Ascending aorta (tissue), 2 donors: ENCODE measurements at regions of chr2 and their contacts with region 1.

Region 1: DNA sequence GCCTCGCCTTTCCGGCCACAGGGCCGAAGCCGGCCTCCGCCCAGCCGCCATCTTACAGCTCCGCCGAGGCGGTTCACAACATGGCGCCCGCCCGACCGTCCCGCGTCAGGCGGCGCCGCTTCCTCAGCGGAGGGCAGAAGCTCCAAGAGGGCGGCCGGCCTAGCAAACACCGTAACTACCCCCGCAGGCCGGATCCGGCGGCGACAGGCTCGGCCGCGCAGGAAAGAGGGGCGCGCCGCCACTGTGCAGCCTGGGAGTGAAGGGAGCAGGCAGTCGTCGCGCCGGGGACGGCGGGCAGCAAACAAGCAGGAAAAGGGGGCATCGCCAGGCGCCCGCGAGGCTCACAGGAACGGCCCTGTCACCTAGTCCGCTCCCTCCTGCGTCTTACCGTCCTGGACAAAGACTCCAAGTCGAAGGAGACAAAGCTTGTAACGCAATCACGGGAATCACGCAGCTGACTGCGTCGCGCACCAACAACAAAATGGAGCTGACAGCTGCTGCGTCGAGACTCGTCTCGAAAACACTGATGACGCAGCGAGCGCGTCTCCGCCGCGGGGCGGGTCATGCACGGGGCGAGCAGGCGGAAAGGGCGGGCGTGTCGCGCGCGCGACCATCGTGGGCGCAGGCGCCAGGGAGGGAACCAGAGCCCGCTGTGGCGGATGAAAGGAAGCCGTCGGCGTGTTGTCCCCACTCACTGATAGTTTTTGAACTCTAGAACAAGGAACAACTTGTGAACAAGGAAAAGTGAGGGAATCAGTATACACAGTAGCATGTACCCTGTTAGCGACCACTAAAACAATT is at the start of gene CLK1:
- DNase-seq: peak; percentile 89 to 99
- H3K4me3 ChIP-seq: peak within 1 kb of the TSS; percentile 74 to 80
- H3K27ac ChIP-seq: peak within 1 kb of the TSS; percentile 96 to 100
- H3K4me1 ChIP-seq: peaks cover 0 to 23% of the 10 kb centered on the region in 2 donors
- H3K27me3 ChIP-seq: no peaks in the 10 kb centered on the region
- CTCF ChIP-seq: no peak
- total RNA-seq, gene CLK1: 43.5 TPM

Region 2: DNA sequence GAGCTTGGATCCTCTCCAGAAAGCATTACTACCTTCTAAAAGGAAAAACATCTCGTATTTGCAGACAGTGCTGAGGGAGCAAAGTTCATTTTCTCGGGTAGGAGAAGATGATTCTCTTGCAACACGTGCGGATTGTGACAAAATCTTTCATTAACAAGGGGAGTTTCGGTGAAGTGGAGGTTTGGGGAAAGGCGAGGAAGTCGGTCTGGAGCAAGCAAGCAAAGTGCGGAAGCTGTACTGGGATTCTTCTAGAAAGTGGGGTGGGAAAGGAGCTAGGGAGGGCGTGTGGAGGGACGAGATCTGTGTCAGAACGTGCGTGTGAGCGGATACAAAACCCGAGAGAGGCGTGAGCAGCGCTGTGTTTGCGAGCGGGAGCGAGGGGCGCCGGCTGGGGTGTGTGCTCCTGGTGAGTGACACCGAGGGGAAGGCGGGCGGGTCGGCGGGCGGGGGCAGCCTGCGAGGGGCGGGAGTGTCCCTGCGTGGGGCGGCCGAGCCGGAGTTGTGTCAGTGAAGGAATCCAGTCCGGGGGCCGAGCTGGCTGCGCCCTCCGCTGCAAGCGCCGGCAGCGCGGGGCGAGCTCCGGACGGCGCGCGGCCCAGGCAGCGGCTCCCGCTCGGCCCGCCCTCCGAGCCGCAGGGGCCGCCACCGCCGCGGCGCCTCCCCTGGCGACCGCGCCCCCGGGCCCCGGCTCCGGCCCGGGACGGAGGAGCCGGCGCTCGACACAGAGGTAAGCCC is 558.0 kb before region 1 on chr2 and contains the start of gene SPATS2L:
- intact Hi-C with region 1: loop called (anchors 5 kb)
- DNase-seq: peak; percentile 26 to 86
- H3K4me3 ChIP-seq: peak within 1 kb of the TSS; percentile 77 to 87
- H3K27ac ChIP-seq: peak within 1 kb of the TSS; percentile 86 to 91
- H3K4me1 ChIP-seq: peaks cover 0 to 7% of the 10 kb centered on the region in 2 donors
- H3K27me3 ChIP-seq: no peaks in the 10 kb centered on the region
- CTCF ChIP-seq: no peak
- total RNA-seq, gene SPATS2L: 36.6 TPM

Region 3: DNA sequence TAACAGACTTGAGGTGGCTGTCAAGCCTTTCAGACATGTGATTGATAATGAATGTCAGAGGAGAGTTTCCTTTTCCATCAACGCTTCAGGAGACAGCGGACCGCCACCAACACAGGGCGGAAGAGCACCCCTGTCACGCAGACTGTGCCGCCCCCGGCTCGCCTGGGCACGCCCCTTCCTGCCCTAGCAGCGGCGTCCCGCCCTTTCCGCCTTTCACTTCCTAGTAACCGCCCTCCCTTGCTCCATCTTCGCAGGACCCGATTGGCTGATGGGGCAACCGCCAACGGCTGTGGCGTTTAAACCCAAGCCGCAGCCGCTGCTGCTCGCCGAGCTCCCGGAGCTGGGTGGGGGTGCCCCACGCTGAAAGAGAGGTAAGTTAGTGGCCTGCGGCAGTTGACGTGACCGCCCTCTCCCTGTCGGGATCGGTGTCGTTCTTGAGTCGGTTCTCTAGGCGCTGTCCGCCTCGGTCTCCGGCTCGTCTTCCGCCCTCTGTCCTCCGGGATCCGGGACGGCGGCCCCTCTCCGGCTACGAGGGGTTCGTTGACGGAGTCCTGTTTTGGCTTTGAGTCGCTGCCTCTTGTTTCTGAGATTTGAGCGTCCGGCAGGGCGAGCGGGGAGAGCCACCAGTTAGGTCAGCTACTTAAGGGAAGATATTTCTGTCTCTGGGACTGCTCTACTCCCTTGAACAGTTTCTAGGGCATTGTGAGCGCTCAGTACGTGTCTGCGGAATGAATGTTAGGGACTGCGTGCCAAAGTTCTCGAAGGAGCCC is 338.3 kb before region 1 on chr2 and contains the start of gene SGO2:
- intact Hi-C with region 1: loop called (anchors 10 kb)
- DNase-seq: peak; percentile 70 to 97
- H3K4me3 ChIP-seq: peak within 1 kb of the TSS; percentile 63 to 69
- H3K27ac ChIP-seq: no peak within 1 kb of the TSS
- H3K4me1 ChIP-seq: peaks cover 0 to 6% of the 10 kb centered on the region in 2 donors
- H3K27me3 ChIP-seq: no peaks in the 10 kb centered on the region
- CTCF ChIP-seq: no peak
- total RNA-seq, gene SGO2: 0.96 TPM

Region 4: GRCh38 chr2:200713003-200713703 is 151.2 kb before region 1 on chr2:
- intact Hi-C with region 1: loop called (anchors 1 kb)
- DNase-seq: peak; percentile 81 to 95
- H3K4me3 ChIP-seq: peak overlapping the region; percentile 37 to 48
- H3K27ac ChIP-seq: peak overlapping the region; percentile 70 to 85
- H3K4me1 ChIP-seq: peaks cover 3% of the 10 kb centered on the region in 2 donors
- H3K27me3 ChIP-seq: no peaks in the 10 kb centered on the region
- CTCF ChIP-seq: peak; percentile 74 to 90 (median 82)

Region 5: DNA sequence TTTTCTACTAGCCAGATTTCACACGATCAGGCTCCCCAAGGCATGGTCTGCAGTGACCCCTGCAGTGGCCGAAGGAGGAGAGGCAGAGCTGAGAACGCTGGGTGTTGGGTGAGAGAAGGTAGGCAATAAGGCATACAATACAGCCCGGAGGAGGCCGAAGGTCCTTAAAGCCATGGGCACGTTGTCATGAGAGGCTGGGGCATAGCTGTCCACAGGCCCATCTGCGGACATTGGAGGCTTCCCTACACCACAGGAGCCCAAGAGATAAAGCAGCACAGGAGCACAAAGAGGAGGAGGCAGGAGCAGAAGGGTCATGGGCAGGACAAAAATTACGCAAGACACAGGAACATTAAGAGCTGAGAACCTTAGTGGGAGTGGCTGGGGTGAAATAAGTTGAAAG is 69.3 kb before region 1 on chr2:
- intact Hi-C with region 1: no loop called
- DNase-seq: no peak
- H3K4me3 ChIP-seq: no peak overlapping the region
- H3K27ac ChIP-seq: no peak overlapping the region
- H3K4me1 ChIP-seq: peaks cover 0 to 6% of the 10 kb centered on the region in 2 donors
- H3K27me3 ChIP-seq: no peaks in the 10 kb centered on the region
- CTCF ChIP-seq: no peak

Region 6: DNA sequence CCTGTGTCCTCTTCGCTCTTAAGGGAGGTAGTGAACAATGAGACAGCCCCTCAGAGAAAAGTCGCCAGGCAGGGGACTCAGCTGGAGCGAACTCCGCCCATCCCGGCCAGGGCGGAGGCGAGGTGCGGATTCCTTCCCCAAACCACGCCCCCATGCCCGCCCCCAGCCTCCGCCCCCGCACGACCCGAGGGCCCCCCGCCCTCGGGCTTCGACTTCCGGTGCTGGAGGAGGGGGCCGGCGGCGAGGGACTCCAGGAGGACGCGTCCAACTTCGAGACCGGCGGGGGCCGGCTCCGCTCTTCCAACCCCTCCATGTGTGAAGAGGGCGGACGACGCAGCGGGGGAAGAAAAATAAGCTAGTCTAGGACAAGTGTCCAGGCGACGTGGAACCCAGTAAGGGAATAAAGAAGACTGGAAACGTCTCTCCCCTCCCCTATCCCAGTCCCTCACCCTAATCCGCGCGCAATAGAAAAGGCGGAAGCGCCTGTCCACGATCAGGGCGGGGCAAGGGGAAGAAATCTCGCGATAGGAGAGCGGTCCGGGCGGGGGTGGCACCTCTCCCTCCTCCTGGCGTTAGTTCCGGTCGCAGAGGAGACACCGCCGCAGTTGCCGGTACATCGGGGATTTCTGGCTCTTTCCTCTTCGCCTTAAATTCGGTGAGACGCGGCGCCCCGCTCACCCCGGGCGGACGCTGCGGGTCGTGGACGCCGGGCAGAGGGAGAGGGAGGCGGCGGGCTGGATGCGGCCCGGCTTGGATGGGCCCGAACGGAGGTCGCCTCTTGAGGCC is 52.8 kb before region 1 on chr2 and contains the start of gene BZW1:
- intact Hi-C with region 1: loop called (anchors 1 kb)
- DNase-seq: peak; percentile 77 to 96
- H3K4me3 ChIP-seq: peak within 1 kb of the TSS; percentile 81 to 97
- H3K27ac ChIP-seq: peak within 1 kb of the TSS; percentile 98
- H3K4me1 ChIP-seq: peaks cover 6 to 40% of the 10 kb centered on the region in 2 donors
- H3K27me3 ChIP-seq: no peaks in the 10 kb centered on the region
- CTCF ChIP-seq: no peak
- total RNA-seq, gene BZW1: 85.4 TPM

Region 7: DNA sequence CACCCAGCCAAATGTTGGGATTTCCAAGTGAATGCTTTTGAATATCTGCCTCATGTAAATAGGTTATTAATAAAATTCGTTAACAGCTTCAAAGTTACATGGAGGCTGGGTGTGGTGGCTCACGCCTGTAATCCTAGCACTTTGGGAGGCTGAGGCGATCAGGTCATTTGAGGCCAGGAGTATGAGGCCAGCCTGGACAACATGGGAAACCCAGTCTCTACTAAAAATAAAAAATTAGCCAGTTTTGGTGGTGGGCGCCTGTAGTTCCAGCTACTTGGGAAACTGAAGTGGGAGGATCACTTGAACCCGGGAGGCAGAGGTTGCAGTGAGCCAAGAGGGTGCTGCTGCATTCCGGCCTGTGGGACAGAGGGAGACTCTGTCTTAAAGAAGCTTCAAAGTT is 42.7 kb before region 1 on chr2:
- intact Hi-C with region 1: no loop called
- DNase-seq: no peak
- H3K4me3 ChIP-seq: no peak overlapping the region
- H3K27ac ChIP-seq: no peak overlapping the region
- H3K4me1 ChIP-seq: no peaks in the 10 kb centered on the region
- H3K27me3 ChIP-seq: no peaks in the 10 kb centered on the region
- CTCF ChIP-seq: no peak

Region 8: GRCh38 chr2:200963124-200963917 is 98.9 kb after region 1 on chr2 and contains the start of gene ORC2:
- intact Hi-C with region 1: loop called (anchors 2 kb)
- DNase-seq: peak; percentile 78 to 97
- H3K4me3 ChIP-seq: peak within 1 kb of the TSS; percentile 85 to 86
- H3K27ac ChIP-seq: peak within 1 kb of the TSS; percentile 71 to 82
- H3K4me1 ChIP-seq: peaks cover 0 to 8% of the 10 kb centered on the region in 2 donors
- H3K27me3 ChIP-seq: no peaks in the 10 kb centered on the region
- CTCF ChIP-seq: peak; percentile 44 to 73 (median 50)
- total RNA-seq, gene ORC2: 5.2 TPM

Region 9: DNA sequence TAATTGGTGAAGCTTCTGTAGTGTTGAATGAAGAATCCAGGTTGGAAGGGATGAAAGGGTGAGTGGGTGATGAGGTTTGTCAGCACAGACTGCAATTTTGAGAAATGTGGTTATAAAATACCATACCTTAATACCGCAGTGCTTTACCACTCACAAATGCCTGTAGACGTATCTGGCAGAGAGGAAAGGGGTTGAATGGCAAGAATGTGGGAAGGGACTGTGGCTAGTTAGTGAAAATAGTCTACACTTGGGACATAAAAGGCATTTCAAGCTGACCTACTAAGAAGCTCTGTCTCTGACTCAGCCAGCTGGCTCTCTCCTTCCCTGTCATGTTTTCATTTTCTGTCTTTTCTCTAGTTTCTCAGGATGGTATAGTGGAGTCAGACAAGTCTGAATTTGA is 967.1 kb after region 1 on chr2:
- intact Hi-C with region 1: no loop called
- DNase-seq: no peak
- H3K4me3 ChIP-seq: no peak overlapping the region
- H3K27ac ChIP-seq: peak overlapping the region; percentile 28 to 42
- H3K4me1 ChIP-seq: no peaks in the 10 kb centered on the region
- H3K27me3 ChIP-seq: no peaks in the 10 kb centered on the region
- CTCF ChIP-seq: no peak